ENCODE measurements at regions of chr17 and their contacts with region 1.

Region 1: GRCh38 chr17:29549177-29549923 is 17.5 kb downstream of the ABHD15 start:
- DNase-seq: peak; percentile 44
- ATAC-seq: peak; percentile 36
- H3K4me3 ChIP-seq: no peak overlapping the region
- H3K27ac ChIP-seq: no peak overlapping the region
- H3K4me1 ChIP-seq: peaks cover 2% of the 10 kb centered on the region; the same call in 1 of the 2 replicates
- H3K27me3 ChIP-seq: no peaks in the 10 kb centered on the region
- CTCF ChIP-seq: no peak
- POLR2A ChIP-seq: no peak
- RAD21 ChIP-seq: no peak

Region 2: GRCh38 chr17:29433541-29433940 is 115.8 kb before region 1 on chr17:
- CTCF ChIA-PET with region 1: no interaction called
- POLR2A ChIA-PET with region 1: no interaction called
- dilution Hi-C with region 1: no loop called
- in situ Hi-C with region 1: no loop called
- intact Hi-C with region 1: no loop called
- DNase-seq: no peak
- ATAC-seq: no peak
- H3K4me3 ChIP-seq: no peak overlapping the region
- H3K27ac ChIP-seq: no peak overlapping the region
- H3K4me1 ChIP-seq: peaks cover 4% of the 10 kb centered on the region
- H3K27me3 ChIP-seq: no peaks in the 10 kb centered on the region
- CTCF ChIP-seq: no peak
- POLR2A ChIP-seq: no peak
- RAD21 ChIP-seq: no peak

Region 3: GRCh38 chr17:29561554-29562517 is 12.5 kb after region 1 on chr17:
- CTCF ChIA-PET with region 1: interaction called, 4 read pairs
- POLR2A ChIA-PET with region 1: interaction called, 11 read pairs
- dilution Hi-C with region 1: no loop called
- in situ Hi-C with region 1: no loop called
- intact Hi-C with region 1: no loop called
- DNase-seq: no peak
- ATAC-seq: peak; percentile 21
- H3K4me3 ChIP-seq: no peak overlapping the region
- H3K27ac ChIP-seq: no peak overlapping the region
- H3K4me1 ChIP-seq: peaks cover 1% of the 10 kb centered on the region
- H3K27me3 ChIP-seq: no peaks in the 10 kb centered on the region
- CTCF ChIP-seq: no peak
- POLR2A ChIP-seq: no peak
- RAD21 ChIP-seq: no peak

Measured in IMR-90 (cell line).